HAP-1 (cell line): ENCODE measurements at regions of chr19 and their contacts with region 1.

Region 1: GRCh38 chr19:1104311-1105007 is 665 bp downstream of the GPX4 start:
- DNase-seq: peak; percentile 39 to 84
- H3K4me3 ChIP-seq: peak overlapping the region; percentile 64
- H3K4me1 ChIP-seq: peaks cover 11% of the 10 kb centered on the region
- H3K27me3 ChIP-seq: no peaks in the 10 kb centered on the region

Region 2: GRCh38 chr19:677201-677600 is 427.3 kb before region 1 on chr19:
- in situ Hi-C with region 1: no loop called
- DNase-seq: no peak
- H3K4me3 ChIP-seq: no peak overlapping the region
- H3K4me1 ChIP-seq: peaks cover 5% of the 10 kb centered on the region
- H3K27me3 ChIP-seq: peaks cover 16% of the 10 kb centered on the region

Region 3: GRCh38 chr19:771332-771785 is 333.1 kb before region 1 on chr19:
- in situ Hi-C with region 1: no loop called
- DNase-seq: peak; percentile 33 to 80
- H3K4me3 ChIP-seq: no peak overlapping the region
- H3K4me1 ChIP-seq: peaks cover 3% of the 10 kb centered on the region
- H3K27me3 ChIP-seq: no peaks in the 10 kb centered on the region

Region 4: GRCh38 chr19:1205114-1206062 is 100.9 kb after region 1 on chr19 and contains the start of gene STK11:
- in situ Hi-C with region 1: loop called (anchors 5 kb)
- DNase-seq: peak; percentile 95 to 99
- H3K4me3 ChIP-seq: peak within 1 kb of the TSS; percentile 72
- H3K4me1 ChIP-seq: peaks cover 3% of the 10 kb centered on the region
- H3K27me3 ChIP-seq: no peaks in the 10 kb centered on the region